ENCODE measurements at regions of chr1 and their contacts with region 1.

Region 1: GRCh38 chr1:36609241-36610027 is 126.7 kb upstream of the CSF3R start:
- H3K4me3 ChIP-seq: no peak overlapping the region
- H3K27ac ChIP-seq: no peak overlapping the region
- H3K4me1 ChIP-seq: no peaks in the 10 kb centered on the region
- CTCF ChIP-seq: no peak

Region 2: GRCh38 chr1:36594023-36594422 is 15.4 kb before region 1 on chr1:
- CTCF ChIA-PET with region 1: interaction called, 12 read pairs
- POLR2A ChIA-PET with region 1: no interaction called
- H3K4me3 ChIP-seq: no peak overlapping the region
- H3K27ac ChIP-seq: no peak overlapping the region
- H3K4me1 ChIP-seq: no peaks in the 10 kb centered on the region
- CTCF ChIP-seq: no peak

Region 3: GRCh38 chr1:36620142-36620541 is 10.7 kb after region 1 on chr1:
- CTCF ChIA-PET with region 1: interaction called, 21 read pairs
- POLR2A ChIA-PET with region 1: no interaction called
- H3K4me3 ChIP-seq: no peak overlapping the region
- H3K27ac ChIP-seq: no peak overlapping the region
- H3K4me1 ChIP-seq: no peaks in the 10 kb centered on the region
- CTCF ChIP-seq: no peak